Activated CD4-positive, alpha-beta T cell treated with anti-CD3 and anti-CD28 coated beads, Interleukin-2, amount 10 ng/mL, durations not matched to agents 24 days and 14 days (primary cell): ENCODE measurements at regions of chr6 and their contacts with region 1.

Region 1: GRCh38 chr6:142819603-142820337 is 125.2 kb downstream of the HIVEP2 start:
- DNase-seq: peak; percentile 86
- H3K4me3 Mint-ChIP-seq: peak overlapping the region; percentile 88
- H3K27ac Mint-ChIP-seq: peak overlapping the region; percentile 94
- H3K4me1 Mint-ChIP-seq: peaks cover 63% of the 10 kb centered on the region
- H3K27me3 Mint-ChIP-seq: peaks cover 2% of the 10 kb centered on the region

Region 2: DNA sequence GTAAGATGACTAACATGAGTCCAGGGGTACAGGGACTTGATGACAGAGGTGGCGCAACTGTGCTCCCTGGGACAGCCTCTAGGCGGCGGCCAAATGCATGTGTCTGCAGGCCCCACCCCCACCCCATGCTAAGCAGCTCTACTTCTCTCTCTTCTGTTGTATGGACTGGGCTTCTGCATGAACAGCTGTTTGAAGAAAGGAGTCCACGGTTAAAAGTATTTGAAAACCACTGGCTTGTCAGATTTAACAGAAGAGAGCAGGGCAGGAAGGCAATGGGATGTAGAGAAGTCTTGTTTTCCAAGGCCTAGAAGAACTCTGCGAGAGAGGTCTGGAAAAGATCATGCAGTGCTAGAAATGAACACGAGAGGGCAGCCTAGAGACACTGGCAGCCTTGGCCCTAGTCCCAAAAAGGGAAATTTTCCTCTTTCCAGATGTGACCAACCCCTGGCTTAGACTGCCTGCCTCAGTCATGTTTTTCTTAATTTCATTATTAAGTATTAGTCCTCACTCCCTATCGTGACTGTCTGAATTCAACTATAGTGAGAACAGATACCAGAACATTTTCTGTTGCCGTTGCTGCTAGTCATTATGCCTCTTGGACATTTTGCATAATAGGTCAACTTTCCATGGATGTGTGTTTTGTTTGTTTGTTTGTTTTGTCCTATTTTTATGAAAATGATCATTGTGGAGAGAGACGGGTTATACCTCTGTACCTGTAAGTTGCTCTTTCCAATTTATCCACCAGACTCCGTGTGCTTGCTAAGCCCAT is 253.0 kb before region 1 on chr6:
- intact Hi-C with region 1: loop called (anchors 2 kb)
- DNase-seq: peak; percentile 89
- H3K4me3 Mint-ChIP-seq: no peak overlapping the region
- H3K27ac Mint-ChIP-seq: no peak overlapping the region
- H3K4me1 Mint-ChIP-seq: peaks cover 32% of the 10 kb centered on the region
- H3K27me3 Mint-ChIP-seq: no peaks in the 10 kb centered on the region

Region 3: GRCh38 chr6:142756215-142756634 is 63.5 kb before region 1 on chr6:
- intact Hi-C with region 1: loop called (anchors 2 kb)
- DNase-seq: no peak
- H3K4me3 Mint-ChIP-seq: no peak overlapping the region
- H3K27ac Mint-ChIP-seq: no peak overlapping the region
- H3K4me1 Mint-ChIP-seq: peaks cover 14% of the 10 kb centered on the region
- H3K27me3 Mint-ChIP-seq: no peaks in the 10 kb centered on the region

Region 4: DNA sequence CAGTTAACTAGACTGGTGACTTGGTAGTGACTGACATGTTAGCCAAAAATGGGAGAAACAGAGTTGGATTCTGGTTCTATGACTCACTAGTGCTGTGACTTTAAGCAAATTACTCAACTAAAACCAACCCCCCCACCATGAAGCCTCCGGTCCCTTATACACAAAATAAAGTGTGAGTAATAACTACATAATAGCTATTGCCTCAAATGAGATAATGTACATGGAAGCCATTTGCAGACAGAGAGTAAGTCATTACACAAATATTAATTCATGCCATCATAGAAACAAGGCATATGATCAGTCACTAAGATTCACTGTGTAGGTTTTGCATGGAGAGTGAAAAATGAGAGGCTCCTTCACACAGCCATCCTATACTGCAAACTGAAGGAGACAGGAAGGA is 13.3 kb after region 1 on chr6:
- intact Hi-C with region 1: loop called (anchors 1 kb)
- DNase-seq: no peak
- H3K4me3 Mint-ChIP-seq: no peak overlapping the region
- H3K27ac Mint-ChIP-seq: peak overlapping the region; percentile 23
- H3K4me1 Mint-ChIP-seq: peaks cover 40% of the 10 kb centered on the region
- H3K27me3 Mint-ChIP-seq: no peaks in the 10 kb centered on the region

Region 5: DNA sequence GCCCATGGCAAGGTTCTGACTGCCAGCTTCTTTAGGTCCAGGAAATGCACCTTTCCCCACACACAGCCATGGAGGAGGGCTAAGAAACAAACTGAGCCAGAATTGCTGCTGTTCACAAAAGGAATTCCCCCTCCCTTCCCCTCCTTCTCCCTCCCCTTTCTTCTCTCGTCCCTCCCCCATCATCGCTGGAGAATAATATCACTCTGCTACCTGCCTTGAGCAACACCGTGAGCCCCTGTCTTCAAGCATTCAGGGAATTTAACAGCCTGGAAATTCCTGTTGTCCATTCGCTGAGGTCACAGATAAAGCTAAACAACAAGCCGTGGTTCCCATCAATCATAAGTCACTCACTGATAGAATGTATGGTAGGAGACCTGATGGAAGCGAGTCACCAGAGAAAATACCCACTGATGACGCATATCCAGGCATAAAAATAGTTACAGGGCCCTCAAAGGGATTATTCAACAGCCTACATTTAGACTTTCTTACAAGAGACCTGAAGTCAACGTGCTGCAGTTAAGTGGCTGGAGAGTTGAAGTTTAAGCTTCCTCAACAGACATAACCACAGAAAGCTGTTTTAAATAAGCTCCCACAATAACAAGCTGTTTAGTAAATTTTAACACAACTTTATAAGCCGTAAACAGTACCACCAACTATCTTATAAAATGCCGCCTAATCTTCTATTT is 65.6 kb after region 1 on chr6:
- intact Hi-C with region 1: loop called (anchors 1 kb)
- DNase-seq: peak; percentile 86
- H3K4me3 Mint-ChIP-seq: peak overlapping the region; percentile 92
- H3K27ac Mint-ChIP-seq: peak overlapping the region; percentile 99
- H3K4me1 Mint-ChIP-seq: peaks cover 63% of the 10 kb centered on the region
- H3K27me3 Mint-ChIP-seq: no peaks in the 10 kb centered on the region

Region 6: DNA sequence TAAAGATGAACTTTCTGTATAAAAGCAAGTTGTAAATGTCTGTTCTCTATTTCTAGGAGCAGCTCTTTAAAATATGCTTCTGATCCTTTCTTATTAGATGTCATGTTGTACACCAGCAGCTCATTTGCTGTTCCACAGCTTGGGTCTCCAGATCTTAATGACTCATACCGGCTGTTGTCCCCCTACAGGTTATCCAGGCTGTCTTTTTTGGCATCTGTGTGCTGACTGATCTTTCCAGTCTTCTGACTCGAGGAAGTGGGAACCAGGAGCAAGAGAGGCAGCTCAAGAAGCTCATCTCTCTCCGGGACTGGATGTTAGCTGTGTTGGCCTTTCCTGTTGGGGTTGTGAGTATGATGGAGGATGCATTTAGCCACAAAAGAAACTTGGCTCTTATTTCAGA is 316.9 kb after region 1 on chr6:
- intact Hi-C with region 1: loop called (anchors 5 kb)
- DNase-seq: no peak
- H3K4me3 Mint-ChIP-seq: no peak overlapping the region
- H3K27ac Mint-ChIP-seq: peak overlapping the region; percentile 76
- H3K4me1 Mint-ChIP-seq: peaks cover 21% of the 10 kb centered on the region
- H3K27me3 Mint-ChIP-seq: no peaks in the 10 kb centered on the region